Activated B cell treated with CpG ODN at 0.5 μM for 24 hours (primary cell): ENCODE measurements at regions of chr7 and their contacts with region 1.

Region 1: GRCh38 chr7:148262721-148263229 is 327.8 kb upstream of the C7orf33 start:
- DNase-seq: peak; percentile 60
- ATAC-seq: peak; percentile 88
- H3K4me3 Mint-ChIP-seq: peak overlapping the region; percentile 69
- H3K27ac Mint-ChIP-seq: no peak overlapping the region
- H3K4me1 Mint-ChIP-seq: peaks cover 27% of the 10 kb centered on the region
- H3K27me3 Mint-ChIP-seq: peaks cover 5% of the 10 kb centered on the region
- CTCF ChIP-seq: peak; percentile 94

Region 2: GRCh38 chr7:148242294-148242801 is 20.4 kb before region 1 on chr7:
- CTCF ChIA-PET with region 1: interaction called, 11 read pairs
- POLR2A ChIA-PET with region 1: no interaction called
- intact Hi-C with region 1: no loop called
- DNase-seq: no peak
- ATAC-seq: peak; percentile 18
- H3K4me3 Mint-ChIP-seq: no peak overlapping the region
- H3K27ac Mint-ChIP-seq: no peak overlapping the region
- H3K4me1 Mint-ChIP-seq: peaks cover 5% of the 10 kb centered on the region
- H3K27me3 Mint-ChIP-seq: peaks cover 35% of the 10 kb centered on the region
- CTCF ChIP-seq: no peak

Region 3: DNA sequence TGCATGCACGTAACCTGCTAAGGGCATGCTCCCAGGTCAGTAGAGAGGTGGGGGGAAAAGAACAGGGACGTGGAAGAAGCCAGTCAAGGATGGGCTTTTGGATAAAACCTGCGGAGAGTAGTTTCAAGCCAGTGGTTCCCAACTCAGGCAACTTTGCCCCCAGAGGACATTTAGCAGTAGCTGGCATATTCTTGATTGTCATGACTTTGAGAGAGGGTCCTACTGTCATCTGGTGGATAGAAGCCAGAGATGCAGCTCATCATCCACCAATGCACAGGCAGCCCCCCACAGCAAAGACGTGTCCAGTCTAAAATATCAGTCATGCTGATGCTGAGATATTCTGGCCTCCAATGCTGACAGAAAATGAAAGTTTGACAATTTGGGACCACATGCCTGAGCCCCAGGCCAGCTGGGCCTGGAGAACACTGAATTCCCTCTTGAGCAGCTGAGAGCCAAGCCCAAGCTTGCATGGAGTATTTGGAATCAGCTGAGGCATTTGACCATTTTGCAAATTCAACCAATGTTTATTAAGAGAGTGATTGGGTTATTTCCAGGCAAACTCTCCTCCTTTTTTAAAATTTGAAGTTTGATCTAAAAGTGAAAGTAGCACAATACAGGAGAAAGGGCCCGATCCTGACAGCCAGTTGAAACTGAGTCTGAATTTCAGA is 217.8 kb after region 1 on chr7:
- CTCF ChIA-PET with region 1: interaction called, 26 read pairs
- POLR2A ChIA-PET with region 1: no interaction called
- intact Hi-C with region 1: loop called (anchors 1 kb)
- DNase-seq: no peak
- ATAC-seq: no peak
- H3K4me3 Mint-ChIP-seq: no peak overlapping the region
- H3K27ac Mint-ChIP-seq: no peak overlapping the region
- H3K4me1 Mint-ChIP-seq: peaks cover 22% of the 10 kb centered on the region
- H3K27me3 Mint-ChIP-seq: no peaks in the 10 kb centered on the region
- CTCF ChIP-seq: no peak

Region 4: DNA sequence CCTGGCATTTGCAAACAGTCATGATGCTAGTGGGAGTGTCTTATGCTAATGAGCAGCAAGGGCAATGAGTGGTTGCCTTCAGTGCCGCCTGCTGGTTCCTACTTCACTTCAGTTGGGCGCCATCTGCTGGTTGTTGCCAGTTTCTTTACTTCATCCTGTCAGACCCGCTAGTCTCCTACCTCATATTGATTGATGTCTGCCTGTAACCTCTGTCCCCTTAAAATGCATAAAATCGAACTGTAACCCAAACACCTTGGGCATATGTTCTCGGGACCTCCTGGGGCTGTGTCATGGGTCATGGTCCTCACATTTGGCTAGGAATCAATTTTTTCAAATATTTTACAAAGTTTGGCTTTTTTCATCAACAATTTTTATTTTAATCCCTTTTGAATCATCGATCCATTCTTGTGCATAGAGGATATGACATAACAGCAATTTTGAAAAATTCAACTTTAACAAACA is 265.0 kb after region 1 on chr7:
- CTCF ChIA-PET with region 1: interaction called, 29 read pairs
- POLR2A ChIA-PET with region 1: no interaction called
- intact Hi-C with region 1: loop called (anchors 1 kb)
- DNase-seq: peak; percentile 54
- ATAC-seq: peak; percentile 94
- H3K4me3 Mint-ChIP-seq: no peak overlapping the region
- H3K27ac Mint-ChIP-seq: no peak overlapping the region
- H3K4me1 Mint-ChIP-seq: peaks cover 28% of the 10 kb centered on the region
- H3K27me3 Mint-ChIP-seq: no peaks in the 10 kb centered on the region
- CTCF ChIP-seq: peak; percentile 25

Region 5: GRCh38 chr7:148962823-148963582 is 700.2 kb after region 1 on chr7:
- CTCF ChIA-PET with region 1: interaction called, 9 read pairs
- POLR2A ChIA-PET with region 1: no interaction called
- intact Hi-C with region 1: loop called (anchors 1 kb)
- DNase-seq: no peak
- ATAC-seq: peak; percentile 53
- H3K4me3 Mint-ChIP-seq: peak overlapping the region; percentile 93
- H3K27ac Mint-ChIP-seq: peak overlapping the region; percentile 87
- H3K4me1 Mint-ChIP-seq: peaks cover 29% of the 10 kb centered on the region
- H3K27me3 Mint-ChIP-seq: no peaks in the 10 kb centered on the region
- CTCF ChIP-seq: no peak